ENCODE measurements at regions of chr4 and their contacts with region 1.

Region 1: DNA sequence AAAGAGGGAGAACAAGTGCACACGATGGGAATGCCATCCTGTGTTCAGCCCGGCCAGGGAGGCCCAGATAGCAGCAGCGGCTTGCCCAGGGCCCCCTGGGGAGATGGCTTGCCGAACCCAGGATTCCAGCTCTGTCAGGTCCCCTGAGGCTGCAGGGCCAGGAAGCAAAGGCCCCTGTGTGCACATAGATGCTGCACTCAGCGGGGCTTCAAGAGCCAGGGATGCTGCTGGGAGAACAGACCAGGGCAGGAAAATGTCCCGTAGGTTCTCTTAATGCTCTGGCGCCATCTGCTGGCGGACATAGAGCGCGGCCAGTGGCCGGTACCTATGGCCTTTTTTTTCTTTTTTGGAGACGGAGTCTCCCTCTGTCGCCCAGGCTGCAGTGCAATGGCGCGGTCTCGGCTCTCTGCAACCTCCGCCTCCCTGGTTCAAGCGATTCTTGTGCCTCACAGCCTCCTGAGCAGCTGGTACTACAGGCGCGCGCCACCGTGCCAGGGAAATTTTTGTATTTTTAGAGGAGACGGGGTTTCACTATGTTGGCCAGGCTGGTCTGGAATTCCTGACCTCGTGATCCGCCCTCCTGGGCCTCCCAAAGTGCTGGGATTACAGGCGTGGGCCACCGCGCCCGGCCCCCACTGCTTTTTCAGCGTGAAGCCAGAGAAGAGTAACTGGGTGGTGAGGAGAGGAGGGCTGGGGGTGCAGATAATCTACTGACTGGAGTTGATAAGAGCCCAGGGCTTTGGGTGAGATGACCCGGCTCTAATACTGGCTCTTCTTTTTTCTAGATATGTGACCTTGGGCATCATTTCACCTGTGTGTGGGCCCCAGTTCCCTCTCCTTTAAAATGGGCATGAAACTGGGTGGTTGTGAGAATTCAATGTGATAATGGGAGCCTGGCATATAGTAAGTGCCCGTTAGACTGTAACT is 22.5 kb downstream of the MED28 start:
- DNase-seq: peak; percentile 36 to 90 (median 66)
- ATAC-seq: peak; percentile 95
- H3K4me3 ChIP-seq: no peak overlapping the region
- H3K27ac ChIP-seq: no peak overlapping the region
- H3K4me1 ChIP-seq: no peaks in the 10 kb centered on the region
- H3K27me3 ChIP-seq: no peaks in the 10 kb centered on the region
- CTCF ChIP-seq: peak; percentile 90 to 93

Region 2: DNA sequence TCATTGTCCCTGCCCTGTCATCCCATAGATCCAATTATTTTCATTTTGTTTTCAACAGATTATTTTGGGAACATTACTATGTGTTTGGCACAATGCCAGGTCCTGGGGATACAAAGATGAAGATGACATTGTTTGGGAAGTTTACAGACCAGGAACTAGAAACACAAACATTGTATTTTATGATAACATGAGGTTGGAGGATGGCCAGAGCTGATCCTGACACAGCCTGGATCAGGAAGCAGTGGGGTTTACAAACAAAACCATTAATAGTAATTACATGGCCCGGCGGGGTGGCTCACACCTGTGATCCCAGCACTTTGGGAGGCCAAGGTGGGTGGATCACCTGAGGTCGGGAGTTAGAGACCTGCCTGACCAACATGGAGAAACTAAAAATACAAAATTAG is 92.1 kb before region 1 on chr4:
- intact Hi-C with region 1: loop called in 1 of 2 experiments (anchors 5 kb)
- DNase-seq: peak in 1 of 4 donors; percentile 22
- ATAC-seq: no peak
- H3K4me3 ChIP-seq: no peak overlapping the region
- H3K27ac ChIP-seq: peak overlapping the region in 1 of 2 donors; percentile 20
- H3K4me1 ChIP-seq: peaks cover 0 to 5% of the 10 kb centered on the region in 2 donors
- H3K27me3 ChIP-seq: no peaks in the 10 kb centered on the region
- CTCF ChIP-seq: no peak

Region 3: DNA sequence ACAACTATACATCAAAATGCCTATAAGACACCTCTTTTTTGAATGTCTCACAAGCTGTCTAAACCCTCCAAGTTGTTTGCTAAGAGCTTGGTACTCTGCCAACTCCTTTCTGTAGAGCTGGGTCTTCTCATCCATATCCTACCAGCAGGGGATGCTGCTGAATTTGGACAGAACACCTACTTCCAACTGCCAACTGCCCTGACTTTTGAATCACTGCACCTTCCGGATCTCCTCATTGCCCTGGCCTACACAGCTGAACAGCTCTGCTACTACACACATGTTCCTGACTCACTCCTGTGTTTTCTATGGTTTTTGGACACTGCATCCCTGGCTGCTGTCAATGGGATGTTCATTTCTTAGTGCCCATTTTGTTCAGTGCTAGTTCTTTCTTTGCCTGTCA is 125.8 kb after region 1 on chr4:
- intact Hi-C with region 1: no loop called
- DNase-seq: no peak
- ATAC-seq: peak; percentile 76
- H3K4me3 ChIP-seq: no peak overlapping the region
- H3K27ac ChIP-seq: no peak overlapping the region
- H3K4me1 ChIP-seq: no peaks in the 10 kb centered on the region
- H3K27me3 ChIP-seq: no peaks in the 10 kb centered on the region
- CTCF ChIP-seq: no peak

Measured in left lung (tissue), 14 donors.